ENCODE measurements at regions of chr13 and their contacts with region 1.

Region 1: GRCh38 chr13:60303166-60303565 is 93.9 kb upstream of the TDRD3 start:
- DNase-seq: no peak
- H3K4me3 Mint-ChIP-seq: no peak overlapping the region
- H3K27ac Mint-ChIP-seq: no peak overlapping the region
- H3K4me1 Mint-ChIP-seq: no peaks in the 10 kb centered on the region
- H3K27me3 Mint-ChIP-seq: peaks cover 3% of the 10 kb centered on the region

Region 2: GRCh38 chr13:60379837-60380236 is 76.7 kb after region 1 on chr13:
- intact Hi-C with region 1: loop called (anchors 2 kb)
- DNase-seq: no peak
- H3K4me3 Mint-ChIP-seq: no peak overlapping the region
- H3K27ac Mint-ChIP-seq: no peak overlapping the region
- H3K4me1 Mint-ChIP-seq: no peaks in the 10 kb centered on the region
- H3K27me3 Mint-ChIP-seq: peaks cover 8% of the 10 kb centered on the region

Measured in activated T-helper 1 cell treated with anti-CD3 and anti-CD28 coated beads, Interleukin-12 subunit alpha, Interleukin-12 subunit beta, Interleukin-2, Interleukin-4 antibody, amounts not matched to agents 30 ng/mL and 10 ng/mL and 1 ng/mL, durations not matched to agents 14 hours and 24 hours and 36 hours (primary cell).